ENCODE measurements at regions of chr14 and their contacts with region 1.

Region 1: DNA sequence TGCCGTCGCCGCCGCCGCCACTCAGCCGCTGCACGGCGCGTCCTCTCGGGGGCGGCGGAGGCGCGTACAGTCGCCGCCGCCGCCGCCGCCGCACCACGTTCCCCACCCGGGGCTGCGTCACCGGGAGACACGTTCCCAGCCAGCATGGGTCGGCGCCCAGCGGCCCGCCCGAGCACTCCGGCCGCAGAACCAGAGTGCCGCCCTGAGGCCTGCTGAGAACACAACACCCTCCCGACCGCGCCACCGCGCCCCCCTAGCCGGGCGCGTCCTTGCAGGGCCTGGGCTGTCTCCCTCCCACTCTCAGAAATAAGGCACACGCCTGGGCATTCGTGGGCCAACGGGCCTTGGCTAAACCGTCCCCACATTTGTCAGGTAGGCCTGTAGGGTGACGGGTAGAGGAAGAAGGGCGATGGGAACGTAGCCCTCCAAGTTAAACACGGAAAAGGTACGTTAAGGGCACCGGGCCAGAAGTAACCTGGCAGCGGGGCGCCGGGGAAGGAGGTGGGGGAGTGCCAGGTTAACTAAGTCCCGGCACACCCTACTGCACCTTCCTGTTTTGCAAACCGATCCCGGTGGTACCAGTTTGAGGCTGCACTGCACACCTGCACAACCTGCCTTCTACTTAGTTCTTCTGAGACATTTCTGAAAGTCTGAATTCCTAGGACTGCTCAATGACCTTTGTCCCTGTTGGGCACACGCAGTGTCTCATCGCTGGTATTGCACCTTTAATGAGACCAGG is at the start of gene MAP4K5:
- DNase-seq: peak; percentile 96
- H3K4me3 ChIP-seq: peak within 1 kb of the TSS; percentile 62 to 98 (median 89)
- H3K27ac ChIP-seq: peak within 1 kb of the TSS; percentile 96 to 98 (median 98)
- H3K4me1 ChIP-seq: peaks cover 0 to 46% (median 31%) of the 10 kb centered on the region in 4 donors
- H3K27me3 ChIP-seq: no peaks in the 10 kb centered on the region
- CTCF ChIP-seq: peak; percentile 89 to 94 (median 90)
- EP300 ChIP-seq: no peak
- POLR2A ChIP-seq: peak in 1 of 2 donors; percentile 4
- total RNA-seq, gene MAP4K5: 144 to 314 (median 176) TPM

Region 2: GRCh38 chr14:49852301-49853157 is 680.1 kb before region 1 on chr14 and contains the start of gene NEMF:
- intact Hi-C with region 1: loop called (anchors 10 kb)
- DNase-seq: peak; percentile 92
- H3K4me3 ChIP-seq: peak within 1 kb of the TSS; percentile 60 to 78 (median 74)
- H3K27ac ChIP-seq: peak within 1 kb of the TSS; percentile 86 to 90 (median 88)
- H3K4me1 ChIP-seq: peaks cover 0 to 31% (median 21%) of the 10 kb centered on the region in 4 donors
- H3K27me3 ChIP-seq: no peaks in the 10 kb centered on the region
- CTCF ChIP-seq: peak; percentile 66 to 93 (median 80)
- EP300 ChIP-seq: no peak
- POLR2A ChIP-seq: peak; percentile 72 to 84
- total RNA-seq, gene NEMF: 73.7 to 121 (median 79.0) TPM

Region 3: DNA sequence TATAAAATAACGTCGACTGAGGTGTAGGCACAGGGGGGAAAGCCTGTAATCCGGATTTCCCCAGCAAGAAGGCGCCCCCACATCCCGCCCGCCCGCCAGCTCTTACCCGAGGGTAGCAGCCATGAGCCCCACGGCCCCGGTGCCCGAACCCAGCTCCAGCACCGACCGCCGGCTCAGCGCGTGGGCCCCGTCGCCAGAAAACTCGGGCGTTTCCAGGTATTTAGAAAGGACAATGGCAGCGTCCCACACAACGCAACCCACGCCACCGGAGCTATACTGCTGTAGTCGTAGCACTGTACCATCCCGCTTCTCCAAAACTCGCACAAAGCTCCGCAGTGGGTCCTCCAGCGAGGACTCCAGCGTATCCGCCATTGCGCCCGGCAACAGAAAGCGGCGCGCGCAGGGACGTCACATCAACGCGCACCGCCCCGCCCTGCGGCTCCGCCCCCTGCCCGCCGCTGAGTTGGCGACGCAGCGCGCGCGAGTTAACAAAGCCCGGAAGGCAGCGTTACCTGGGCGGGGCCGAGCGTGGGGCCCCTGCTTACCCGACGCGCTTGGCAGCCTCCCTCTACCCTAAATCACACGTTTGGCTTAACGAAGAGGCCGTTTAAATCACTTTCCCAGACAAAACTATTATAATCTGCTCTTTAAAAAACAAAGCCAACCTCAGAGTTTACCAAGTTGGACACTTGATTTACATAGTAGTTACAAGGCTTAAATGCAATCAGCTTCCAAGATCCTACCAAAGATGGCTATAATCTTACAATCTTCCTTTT is 416.3 kb before region 1 on chr14 and contains the start of gene VCPKMT:
- intact Hi-C with region 1: loop called (anchors 5 kb)
- DNase-seq: peak; percentile 97
- H3K4me3 ChIP-seq: peak within 1 kb of the TSS; percentile 55 to 86 (median 78)
- H3K27ac ChIP-seq: peak within 1 kb of the TSS; percentile 81 to 92 (median 88)
- H3K4me1 ChIP-seq: peaks cover 0 to 24% (median 17%) of the 10 kb centered on the region in 4 donors
- H3K27me3 ChIP-seq: no peaks in the 10 kb centered on the region
- CTCF ChIP-seq: no peak
- EP300 ChIP-seq: peak in 1 of 4 donors; percentile 48
- POLR2A ChIP-seq: peak; percentile 77 to 79
- total RNA-seq, gene VCPKMT: 7.8 to 12.2 (median 9.4) TPM

Region 4: DNA sequence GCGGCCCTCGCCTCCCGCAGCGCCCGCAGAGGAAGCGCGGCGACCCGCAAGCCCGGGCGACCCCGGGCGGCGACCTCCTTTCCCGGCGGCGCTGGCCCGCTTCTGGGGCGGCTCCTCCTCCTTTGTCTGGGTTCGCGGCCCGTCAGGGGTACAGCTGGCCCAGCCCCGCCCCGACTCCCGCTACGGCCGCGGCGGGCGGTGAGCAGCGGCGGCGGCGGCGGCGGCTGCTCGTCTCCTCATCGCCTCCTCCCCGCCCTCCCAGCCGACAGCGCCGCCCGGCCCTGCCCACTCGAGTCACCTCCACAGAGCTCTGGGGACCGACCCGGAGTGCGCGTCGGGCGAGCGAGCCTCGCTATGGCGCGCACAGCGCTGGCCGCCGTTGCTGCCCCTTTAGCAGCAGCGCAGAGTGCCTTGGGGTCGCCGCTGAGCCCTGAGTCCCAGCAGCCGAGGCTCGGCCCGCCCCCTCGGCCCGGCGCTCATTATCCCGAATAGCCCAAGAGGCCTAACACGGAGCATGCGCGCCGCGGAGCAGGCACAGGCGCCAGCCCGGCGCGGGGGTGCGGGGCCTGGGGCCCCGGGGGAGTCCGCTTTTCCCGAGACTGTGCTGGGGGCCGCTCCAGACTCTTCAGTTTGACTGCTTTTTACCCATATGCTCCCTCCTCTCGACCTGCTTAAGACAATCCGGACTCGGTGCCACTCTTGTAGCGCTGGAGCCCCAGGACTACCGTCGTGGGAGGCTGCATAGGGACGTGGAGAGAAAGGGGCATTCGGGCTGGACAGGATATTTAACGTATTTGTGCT is 301.0 kb before region 1 on chr14 and contains the start of gene SOS2:
- intact Hi-C with region 1: loop called (anchors 5 kb)
- DNase-seq: peak; percentile 94
- H3K4me3 ChIP-seq: peak within 1 kb of the TSS; percentile 59 to 89 (median 70)
- H3K27ac ChIP-seq: peak within 1 kb of the TSS; percentile 95 to 99 (median 98)
- H3K4me1 ChIP-seq: peaks cover 0 to 53% (median 38%) of the 10 kb centered on the region in 4 donors
- H3K27me3 ChIP-seq: no peaks in the 10 kb centered on the region
- CTCF ChIP-seq: no peak
- EP300 ChIP-seq: no peak
- POLR2A ChIP-seq: peak; percentile 12 to 49
- total RNA-seq, gene SOS2: 31.9 to 40.4 (median 38.7) TPM

Region 5: DNA sequence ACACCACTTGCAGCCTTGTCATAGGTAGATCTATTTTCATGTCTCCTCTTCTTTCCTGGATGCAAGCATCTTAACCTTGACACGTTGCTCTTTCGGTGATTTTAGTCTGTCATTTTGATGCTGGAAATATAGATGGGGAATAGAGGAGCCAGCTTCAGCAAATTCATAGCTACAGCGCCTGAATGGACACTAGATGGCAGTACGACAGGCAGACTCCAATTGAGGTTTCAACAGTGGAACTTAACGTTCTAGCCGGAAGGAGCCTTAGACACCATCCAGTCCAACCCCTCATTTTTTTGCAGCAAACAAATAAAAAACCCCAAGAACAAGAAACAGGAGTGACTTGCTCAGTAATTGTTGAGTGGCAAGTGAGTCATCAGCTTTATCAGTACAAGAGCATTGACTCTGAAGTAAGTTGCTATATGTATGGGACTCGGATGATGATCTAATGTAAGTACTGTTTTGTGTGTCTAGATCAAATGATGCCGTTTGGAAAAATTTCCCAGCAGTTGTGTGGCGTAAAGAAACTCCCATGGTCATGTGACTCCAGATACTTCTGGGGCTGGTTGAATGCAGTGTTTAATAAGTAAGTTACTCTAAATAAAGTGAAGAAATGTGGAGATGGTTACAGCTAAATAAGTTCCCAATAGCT is 211.5 kb before region 1 on chr14:
- intact Hi-C with region 1: loop called (anchors 1 kb)
- DNase-seq: peak; percentile 82
- H3K4me3 ChIP-seq: peak overlapping the region in 3 of 4 donors; percentile 19 to 37 (median 21)
- H3K27ac ChIP-seq: peak overlapping the region; percentile 72 to 80 (median 76)
- H3K4me1 ChIP-seq: peaks cover 0 to 38% (median 17%) of the 10 kb centered on the region in 4 donors
- H3K27me3 ChIP-seq: no peaks in the 10 kb centered on the region
- CTCF ChIP-seq: peak; percentile 72 to 90 (median 83)
- EP300 ChIP-seq: no peak
- POLR2A ChIP-seq: no peak

Region 6: DNA sequence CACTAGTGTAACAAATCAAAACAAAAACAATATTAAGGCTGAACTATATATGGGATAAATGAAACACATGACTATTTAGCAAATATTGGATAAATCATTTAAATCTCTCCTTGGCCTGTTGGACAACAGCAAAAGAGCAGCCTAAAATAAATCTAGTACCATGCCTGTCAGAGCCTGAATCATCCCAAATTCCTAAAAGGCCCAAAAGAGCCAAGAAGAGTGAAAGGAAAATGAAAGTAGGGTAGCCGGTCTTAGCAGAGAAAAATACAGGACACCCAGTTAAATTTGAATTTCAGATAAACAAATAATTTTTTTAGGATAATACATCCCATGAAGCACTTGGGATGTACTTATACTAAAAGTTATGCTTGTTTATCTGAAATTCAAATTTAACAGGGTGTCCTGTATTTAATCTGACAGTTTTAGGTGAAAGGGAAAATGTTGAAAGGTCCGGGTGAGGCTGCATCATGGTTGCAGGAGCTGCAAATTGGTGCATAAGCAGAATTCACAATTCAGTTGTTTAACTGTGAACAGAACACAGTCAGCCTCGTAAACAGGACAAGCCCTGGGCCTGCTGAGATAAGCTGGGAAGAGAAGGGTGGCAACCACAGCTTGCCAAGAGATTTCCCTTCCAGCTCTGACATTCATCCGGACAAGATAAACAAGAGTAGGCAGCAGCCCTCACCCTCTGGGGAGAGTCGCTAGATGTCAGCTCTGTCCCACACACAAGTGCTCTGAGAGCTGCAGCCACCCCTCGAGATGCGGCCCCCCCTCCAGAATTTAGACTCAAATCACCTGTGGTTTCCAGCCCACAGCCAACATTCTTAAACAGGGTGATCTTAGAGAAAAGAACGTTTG is 190.2 kb before region 1 on chr14:
- intact Hi-C with region 1: loop called (anchors 2 kb)
- DNase-seq: peak; percentile 88
- H3K4me3 ChIP-seq: peak overlapping the region; percentile 14 to 38 (median 26)
- H3K27ac ChIP-seq: peak overlapping the region; percentile 55 to 81 (median 68)
- H3K4me1 ChIP-seq: peaks cover 0 to 94% (median 65%) of the 10 kb centered on the region in 4 donors
- H3K27me3 ChIP-seq: no peaks in the 10 kb centered on the region
- CTCF ChIP-seq: peak in 1 of 4 experiments; percentile 16
- EP300 ChIP-seq: peak in 1 of 4 donors; percentile 10
- POLR2A ChIP-seq: no peak

Region 7: DNA sequence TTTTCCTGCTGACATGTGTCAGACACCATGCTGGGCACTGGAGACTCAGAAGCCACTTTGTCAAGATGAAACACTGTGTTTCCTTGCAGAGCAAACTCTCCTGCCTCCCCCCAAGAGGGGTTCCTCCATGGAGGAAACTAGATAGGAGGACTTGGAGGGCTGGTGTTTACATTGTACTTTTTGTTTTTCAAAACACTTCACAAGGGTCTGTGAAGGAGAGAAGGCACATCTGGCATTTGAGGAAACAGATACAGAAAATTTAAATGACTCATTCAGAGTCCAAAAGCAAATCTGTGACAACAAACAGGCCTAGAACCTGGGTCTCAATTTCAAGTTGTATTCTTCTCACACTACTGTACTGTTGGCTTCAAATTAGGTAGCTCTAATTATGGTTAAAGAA is 129.3 kb before region 1 on chr14:
- intact Hi-C with region 1: loop called (anchors 2 kb)
- DNase-seq: no peak
- H3K4me3 ChIP-seq: no peak overlapping the region
- H3K27ac ChIP-seq: peak overlapping the region in 1 of 4 donors; percentile 24
- H3K4me1 ChIP-seq: peaks cover 0 to 35% (median 26%) of the 10 kb centered on the region in 4 donors
- H3K27me3 ChIP-seq: no peaks in the 10 kb centered on the region
- CTCF ChIP-seq: no peak
- EP300 ChIP-seq: no peak
- POLR2A ChIP-seq: no peak

Measured in sigmoid colon (tissue), 7 donors.